ENCODE measurements at regions of chr14 and their contacts with region 1.

Region 1: DNA sequence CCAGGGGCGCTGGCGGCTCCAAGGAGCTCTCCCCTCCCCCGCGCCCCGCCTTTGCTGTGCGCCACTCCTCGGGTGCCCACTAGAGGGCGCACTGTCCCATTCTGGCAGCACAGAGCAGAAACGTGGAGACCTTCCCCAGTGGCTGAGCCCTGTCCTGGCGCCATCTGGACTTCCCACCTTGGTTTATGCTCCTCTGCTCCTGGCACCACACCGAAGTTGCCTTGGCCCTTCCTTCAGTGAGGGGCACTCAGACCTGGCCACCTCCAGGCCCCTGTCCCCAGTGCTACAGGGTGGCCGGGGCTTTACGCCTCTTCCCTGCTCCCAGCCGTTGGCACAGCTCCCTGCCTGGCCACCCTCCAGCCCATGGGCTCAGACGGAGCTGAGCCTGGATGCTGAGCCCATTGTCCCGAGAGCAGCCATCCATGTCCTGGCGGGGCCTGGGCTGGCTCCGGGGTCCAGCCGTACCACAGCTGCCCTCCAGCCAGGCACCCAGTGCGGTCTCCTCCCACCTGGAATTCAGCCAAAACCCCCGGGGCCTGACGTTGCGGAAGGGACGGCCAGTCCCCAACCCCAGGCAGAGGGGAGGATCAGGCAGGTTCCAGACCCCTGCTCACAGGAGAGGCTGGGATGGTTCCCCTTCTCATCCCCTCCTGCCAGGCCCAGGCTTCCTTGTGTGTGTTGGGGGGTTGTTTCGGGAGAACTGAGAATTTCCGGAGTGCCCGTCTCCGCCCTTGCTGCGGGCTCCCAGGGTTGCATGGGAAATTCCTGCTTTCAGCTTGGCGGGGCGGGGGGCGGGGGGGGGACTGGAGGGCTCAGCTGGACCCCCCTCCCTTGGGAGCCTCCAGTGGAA is 5.5 kb upstream of the CRIP1 start:
- DNase-seq: peak; percentile 93
- H3K4me3 ChIP-seq: no peak overlapping the region
- H3K27ac ChIP-seq: peak overlapping the region; percentile 91
- H3K4me1 ChIP-seq: peaks cover 26% of the 10 kb centered on the region
- H3K27me3 ChIP-seq: no peaks in the 10 kb centered on the region
- CTCF ChIP-seq: peak; percentile 99 to 100
- POLR2A ChIP-seq: peak; percentile 37

Region 2: DNA sequence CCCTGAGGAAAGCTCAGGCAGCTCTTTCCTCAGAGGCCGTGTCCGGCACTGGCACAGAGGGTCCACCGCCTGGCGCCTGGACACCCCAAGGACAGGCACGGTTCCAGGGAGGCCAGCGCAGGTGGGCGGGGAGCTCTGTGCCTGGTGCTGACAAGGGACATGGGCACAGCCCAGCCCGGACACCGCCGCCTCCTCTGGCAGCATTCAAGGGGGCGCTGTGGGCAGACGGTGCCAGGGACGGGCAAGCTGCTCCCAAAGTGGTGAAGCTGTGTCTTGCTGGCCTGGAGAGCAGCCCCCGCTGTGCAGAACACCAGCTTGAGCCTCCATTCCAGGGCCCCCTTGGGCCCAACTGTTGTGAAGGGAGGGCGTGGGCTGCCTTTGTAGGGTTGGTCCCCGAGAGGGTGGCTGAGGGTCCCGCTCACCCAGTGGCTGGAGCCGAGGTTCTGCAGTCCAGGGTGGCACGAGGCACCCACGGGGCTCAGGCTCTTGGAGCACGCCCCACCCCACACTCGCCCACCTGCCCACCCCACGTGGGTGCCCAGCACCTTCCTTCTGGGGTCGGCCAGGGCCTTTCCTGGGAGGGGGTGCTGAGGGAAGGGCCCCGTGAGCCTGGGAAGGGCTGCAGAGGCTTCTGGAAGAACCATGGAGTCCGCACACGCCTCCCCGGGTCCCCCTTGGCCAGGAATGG is 112.1 kb before region 1 on chr14:
- CTCF ChIA-PET with region 1: interaction called, 51 read pairs
- POLR2A ChIA-PET with region 1: no interaction called
- dilution Hi-C with region 1: no loop called
- intact Hi-C with region 1: no loop called
- DNase-seq: no peak
- H3K4me3 ChIP-seq: no peak overlapping the region
- H3K27ac ChIP-seq: no peak overlapping the region
- H3K4me1 ChIP-seq: no peaks in the 10 kb centered on the region
- H3K27me3 ChIP-seq: no peaks in the 10 kb centered on the region
- CTCF ChIP-seq: no peak
- POLR2A ChIP-seq: no peak

Region 3: DNA sequence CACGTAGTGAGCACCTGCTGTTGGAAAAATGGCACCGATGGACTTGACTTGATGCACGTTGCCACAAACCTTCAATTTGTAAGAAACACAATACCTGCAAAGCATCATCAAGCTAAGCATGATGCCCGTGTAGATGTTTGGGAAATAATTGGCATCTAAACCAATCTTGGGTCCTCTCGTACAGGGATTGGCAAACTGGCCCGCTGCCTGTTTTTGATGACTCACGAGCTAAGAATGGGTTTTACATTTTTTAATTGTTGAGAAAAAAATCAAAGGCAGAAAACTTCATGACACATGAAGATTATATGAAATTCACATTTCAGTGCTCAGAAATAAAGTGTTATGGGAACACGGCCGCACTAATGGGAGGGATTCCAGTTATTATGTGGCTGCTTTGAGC is 50.6 kb before region 1 on chr14:
- CTCF ChIA-PET with region 1: interaction called, 23 read pairs
- POLR2A ChIA-PET with region 1: interaction called, 3 read pairs
- dilution Hi-C with region 1: no loop called
- intact Hi-C with region 1: no loop called
- DNase-seq: peak; percentile 90
- H3K4me3 ChIP-seq: no peak overlapping the region
- H3K27ac ChIP-seq: peak overlapping the region; percentile 86
- H3K4me1 ChIP-seq: peaks cover 34% of the 10 kb centered on the region
- H3K27me3 ChIP-seq: no peaks in the 10 kb centered on the region
- CTCF ChIP-seq: no peak
- POLR2A ChIP-seq: peak; percentile 20

Region 4: GRCh38 chr14:105448706-105449111 is 32.5 kb before region 1 on chr14:
- CTCF ChIA-PET with region 1: interaction called, 14 read pairs
- POLR2A ChIA-PET with region 1: no interaction called
- dilution Hi-C with region 1: no loop called
- intact Hi-C with region 1: loop called (anchors 1 kb)
- DNase-seq: peak; percentile 74
- H3K4me3 ChIP-seq: no peak overlapping the region
- H3K27ac ChIP-seq: no peak overlapping the region
- H3K4me1 ChIP-seq: no peaks in the 10 kb centered on the region
- H3K27me3 ChIP-seq: no peaks in the 10 kb centered on the region
- CTCF ChIP-seq: peak; percentile 83 to 92
- POLR2A ChIP-seq: no peak

Region 5: GRCh38 chr14:105527661-105528581 is 46.7 kb after region 1 on chr14:
- CTCF ChIA-PET with region 1: interaction called, 25 read pairs
- POLR2A ChIA-PET with region 1: no interaction called
- dilution Hi-C with region 1: no loop called
- intact Hi-C with region 1: no loop called
- DNase-seq: peak; percentile 61
- H3K4me3 ChIP-seq: peak overlapping the region; percentile 26 to 63 (median 49)
- H3K27ac ChIP-seq: no peak overlapping the region
- H3K4me1 ChIP-seq: peaks cover 17% of the 10 kb centered on the region
- H3K27me3 ChIP-seq: peaks cover 6 to 7% of the 10 kb centered on the region in 2 experiments
- CTCF ChIP-seq: peak; percentile 68 to 91
- POLR2A ChIP-seq: peak; percentile 46

Region 6: GRCh38 chr14:106436310-106436905 is 955.2 kb after region 1 on chr14:
- CTCF ChIA-PET with region 1: no interaction called
- POLR2A ChIA-PET with region 1: no interaction called
- dilution Hi-C with region 1: no loop called
- intact Hi-C with region 1: no loop called
- DNase-seq: no peak
- H3K4me3 ChIP-seq: no peak overlapping the region
- H3K27ac ChIP-seq: no peak overlapping the region
- H3K4me1 ChIP-seq: no peaks in the 10 kb centered on the region
- H3K27me3 ChIP-seq: no peaks in the 10 kb centered on the region
- CTCF ChIP-seq: no peak
- POLR2A ChIP-seq: no peak